ENCODE measurements at regions of chr7 and their contacts with region 1.

Region 1: GRCh38 chr7:136405931-136406777 is 429.0 kb upstream of the MTPN start:
- DNase-seq: peak in 2 of 3 donors; percentile 21 to 32
- ATAC-seq: peak; percentile 67 to 73
- H3K4me3 ChIP-seq: no peak overlapping the region
- H3K27ac ChIP-seq: no peak overlapping the region
- H3K4me1 ChIP-seq: no peaks in the 10 kb centered on the region
- H3K27me3 ChIP-seq: no peaks in the 10 kb centered on the region

Region 2: DNA sequence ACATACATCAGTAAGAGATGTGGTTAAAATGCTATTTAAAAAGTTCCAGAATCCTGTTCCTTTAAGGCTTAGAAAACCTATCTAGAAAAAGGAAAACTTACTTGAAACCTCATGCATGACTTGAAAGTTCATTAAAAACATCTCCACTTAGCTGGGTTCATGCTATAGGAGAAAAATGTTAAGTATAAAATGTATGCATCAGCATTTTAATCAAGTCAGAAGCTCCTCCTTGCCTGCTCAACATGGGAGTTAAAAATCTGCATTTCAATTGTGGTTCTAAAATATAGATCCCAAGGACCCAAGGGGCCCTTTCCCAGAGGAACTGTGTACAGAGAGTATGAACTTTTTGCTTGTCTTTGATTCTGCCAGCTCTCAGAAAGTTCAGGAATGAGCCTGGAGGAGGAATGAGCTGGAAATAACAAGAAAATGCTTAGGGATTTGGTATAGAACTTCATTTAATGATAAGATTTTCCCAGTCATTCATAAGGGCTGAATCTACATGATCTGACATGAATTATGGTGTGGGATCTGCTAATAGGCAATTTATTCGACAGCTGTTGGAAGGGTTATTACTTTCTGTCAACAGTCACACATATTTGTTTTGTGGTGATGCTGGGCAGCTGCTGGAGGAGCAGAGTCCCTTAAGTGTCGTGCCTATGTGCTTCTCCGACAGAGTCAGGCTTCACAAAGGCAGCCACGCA is 343.4 kb before region 1 on chr7:
- intact Hi-C with region 1: no loop called
- DNase-seq: peak in 1 of 3 donors; percentile 45
- ATAC-seq: no peak
- H3K4me3 ChIP-seq: no peak overlapping the region
- H3K27ac ChIP-seq: no peak overlapping the region
- H3K4me1 ChIP-seq: no peaks in the 10 kb centered on the region
- H3K27me3 ChIP-seq: no peaks in the 10 kb centered on the region

Region 3: GRCh38 chr7:136228171-136228570 is 178.0 kb before region 1 on chr7:
- intact Hi-C with region 1: no loop called
- DNase-seq: no peak
- ATAC-seq: no peak
- H3K4me3 ChIP-seq: no peak overlapping the region
- H3K27ac ChIP-seq: no peak overlapping the region
- H3K4me1 ChIP-seq: no peaks in the 10 kb centered on the region
- H3K27me3 ChIP-seq: no peaks in the 10 kb centered on the region

Region 4: GRCh38 chr7:137091396-137091795 is 685.2 kb after region 1 on chr7:
- intact Hi-C with region 1: loop called in 1 of 4 experiments (anchors 10 kb)
- DNase-seq: no peak
- ATAC-seq: peak; percentile 73 to 84
- H3K4me3 ChIP-seq: no peak overlapping the region
- H3K27ac ChIP-seq: no peak overlapping the region
- H3K4me1 ChIP-seq: no peaks in the 10 kb centered on the region
- H3K27me3 ChIP-seq: no peaks in the 10 kb centered on the region

Region 5: GRCh38 chr7:137592232-137592896 is 1186.2 kb after region 1 on chr7:
- intact Hi-C with region 1: loop called in 1 of 4 experiments (anchors 10 kb)
- DNase-seq: peak; percentile 56 to 71 (median 61)
- ATAC-seq: peak; percentile 92 to 94
- H3K4me3 ChIP-seq: no peak overlapping the region
- H3K27ac ChIP-seq: no peak overlapping the region
- H3K4me1 ChIP-seq: no peaks in the 10 kb centered on the region
- H3K27me3 ChIP-seq: no peaks in the 10 kb centered on the region